Activated CD8-positive, alpha-beta T cell treated with anti-CD3 and anti-CD28 coated beads, Interleukin-2, amount 10 ng/mL, durations not matched to agents 7 days and 5 days (primary cell): ENCODE measurements at regions of chr11 and their contacts with region 1.

Region 1: DNA sequence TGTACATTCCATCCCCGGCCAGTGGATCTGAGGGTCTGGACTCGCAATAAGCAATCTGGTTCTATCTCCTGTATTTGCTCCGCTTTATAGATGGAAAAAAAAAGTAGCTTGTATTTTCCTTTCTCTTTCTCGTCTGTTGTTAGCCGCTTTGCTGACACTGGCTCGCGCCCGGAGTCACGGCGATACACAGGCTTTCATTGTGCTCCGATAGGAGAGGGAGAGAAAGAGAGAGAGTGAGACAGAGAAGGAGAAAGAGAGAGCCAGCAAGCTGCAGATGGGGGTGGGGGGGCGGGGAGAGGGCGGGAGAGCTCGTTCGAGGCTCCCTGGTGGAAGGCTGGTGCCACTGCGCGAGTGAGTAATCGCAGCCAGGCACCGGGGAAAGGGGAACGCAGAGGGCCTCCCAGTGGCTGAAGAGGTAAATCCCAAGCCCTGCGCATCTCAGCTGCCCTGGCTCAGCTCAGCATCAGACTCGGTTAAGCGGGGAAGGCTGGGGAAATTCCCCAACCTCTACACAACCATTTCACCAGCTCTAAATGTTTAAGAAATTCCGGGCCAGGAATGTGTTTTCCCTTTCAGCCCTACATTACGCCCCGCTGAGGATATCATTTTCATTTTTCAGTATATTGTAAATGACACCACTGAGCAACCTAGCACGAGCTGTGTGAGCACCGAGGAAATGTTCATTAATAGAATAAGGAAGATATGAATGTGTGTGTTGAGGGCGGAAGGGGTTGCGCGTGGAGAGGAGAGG is at the start of gene MAML2:
- DNase-seq: peak; percentile 95
- ATAC-seq: peak; percentile 83
- H3K4me3 Mint-ChIP-seq: peak within 1 kb of the TSS; percentile 91
- H3K27ac Mint-ChIP-seq: peak within 1 kb of the TSS; percentile 95
- H3K4me1 Mint-ChIP-seq: peaks cover 31% of the 10 kb centered on the region
- H3K27me3 Mint-ChIP-seq: no peaks in the 10 kb centered on the region
- total RNA-seq, gene MAML2: 14.7 to 15.5 TPM

Region 2: DNA sequence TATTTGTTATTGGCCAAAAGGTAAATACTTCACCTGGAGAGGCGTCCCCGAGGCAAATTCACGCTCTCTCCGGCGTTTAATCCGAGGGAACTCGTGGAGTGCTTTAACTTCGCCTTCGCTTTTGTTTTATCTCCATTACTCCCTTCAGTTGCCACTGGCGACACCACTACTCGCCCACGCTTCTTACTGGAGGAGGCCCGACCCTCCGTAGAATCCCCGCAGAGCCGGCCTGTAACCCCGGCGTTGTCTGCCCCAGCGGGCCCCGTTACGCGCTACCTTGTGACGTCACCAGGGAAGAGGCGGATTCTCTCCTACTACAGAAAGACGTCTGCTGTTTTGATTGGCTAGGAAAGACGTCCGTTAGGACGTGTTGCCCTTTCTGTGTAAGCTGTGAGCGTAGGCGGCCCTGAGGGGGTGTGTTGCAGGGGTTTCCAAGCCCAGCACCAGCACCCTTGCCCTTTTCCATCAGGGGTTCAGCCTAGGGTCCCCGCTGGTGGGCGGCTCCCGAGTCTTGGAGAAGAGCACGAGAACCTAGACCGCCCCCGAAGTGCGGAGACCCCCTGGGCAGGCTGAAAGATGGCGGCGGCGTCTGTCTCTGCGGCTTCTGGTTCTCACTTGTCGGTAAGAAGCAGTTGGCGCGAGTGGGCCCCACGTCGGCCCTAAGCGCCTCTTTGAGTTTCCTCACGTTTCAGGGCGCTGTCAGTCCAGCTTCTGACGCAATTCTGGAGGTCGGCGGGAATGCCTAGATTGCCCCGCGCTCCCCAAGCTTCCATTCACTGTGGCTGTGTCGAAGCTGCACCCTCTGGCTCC is 552.8 kb before region 1 on chr11 and contains the start of gene CEP57:
- CTCF ChIA-PET with region 1: interaction called, 8 read pairs
- POLR2A ChIA-PET with region 1: interaction called, 29 read pairs
- DNase-seq: peak; percentile 97
- ATAC-seq: peak; percentile 69
- H3K4me3 Mint-ChIP-seq: peak within 1 kb of the TSS; percentile 99
- H3K27ac Mint-ChIP-seq: peak within 1 kb of the TSS; percentile 100
- H3K4me1 Mint-ChIP-seq: peaks cover 55% of the 10 kb centered on the region
- H3K27me3 Mint-ChIP-seq: no peaks in the 10 kb centered on the region
- total RNA-seq, gene CEP57: 85.4 to 86.6 TPM

Region 3: GRCh38 chr11:96062134-96062533 is 281.0 kb before region 1 on chr11:
- CTCF ChIA-PET with region 1: interaction called, 96 read pairs
- POLR2A ChIA-PET with region 1: interaction called, 3 read pairs
- DNase-seq: peak; percentile 48
- ATAC-seq: peak; percentile 80
- H3K4me3 Mint-ChIP-seq: no peak overlapping the region
- H3K27ac Mint-ChIP-seq: peak overlapping the region; percentile 9
- H3K4me1 Mint-ChIP-seq: peaks cover 35% of the 10 kb centered on the region
- H3K27me3 Mint-ChIP-seq: no peaks in the 10 kb centered on the region

Region 4: GRCh38 chr11:96167203-96167758 is 175.9 kb before region 1 on chr11:
- CTCF ChIA-PET with region 1: interaction called, 12 read pairs
- POLR2A ChIA-PET with region 1: no interaction called
- DNase-seq: no peak
- ATAC-seq: no peak
- H3K4me3 Mint-ChIP-seq: no peak overlapping the region
- H3K27ac Mint-ChIP-seq: no peak overlapping the region
- H3K4me1 Mint-ChIP-seq: peaks cover 14% of the 10 kb centered on the region
- H3K27me3 Mint-ChIP-seq: no peaks in the 10 kb centered on the region

Region 5: GRCh38 chr11:96228473-96228891 is 114.7 kb before region 1 on chr11:
- CTCF ChIA-PET with region 1: interaction called, 32 read pairs
- POLR2A ChIA-PET with region 1: interaction called, 5 read pairs
- DNase-seq: no peak
- ATAC-seq: no peak
- H3K4me3 Mint-ChIP-seq: no peak overlapping the region
- H3K27ac Mint-ChIP-seq: no peak overlapping the region
- H3K4me1 Mint-ChIP-seq: peaks cover 30% of the 10 kb centered on the region
- H3K27me3 Mint-ChIP-seq: no peaks in the 10 kb centered on the region

Region 6: GRCh38 chr11:96279018-96279895 is 63.9 kb before region 1 on chr11:
- CTCF ChIA-PET with region 1: interaction called, 36 read pairs
- POLR2A ChIA-PET with region 1: interaction called, 4 read pairs
- DNase-seq: no peak
- ATAC-seq: peak; percentile 57
- H3K4me3 Mint-ChIP-seq: no peak overlapping the region
- H3K27ac Mint-ChIP-seq: peak overlapping the region; percentile 9
- H3K4me1 Mint-ChIP-seq: peaks cover 38% of the 10 kb centered on the region
- H3K27me3 Mint-ChIP-seq: no peaks in the 10 kb centered on the region

Region 7: GRCh38 chr11:96331699-96332116 is 11.4 kb before region 1 on chr11:
- CTCF ChIA-PET with region 1: interaction called, 69 read pairs
- POLR2A ChIA-PET with region 1: interaction called, 5 read pairs
- DNase-seq: no peak
- ATAC-seq: no peak
- H3K4me3 Mint-ChIP-seq: no peak overlapping the region
- H3K27ac Mint-ChIP-seq: no peak overlapping the region
- H3K4me1 Mint-ChIP-seq: peaks cover 60% of the 10 kb centered on the region
- H3K27me3 Mint-ChIP-seq: no peaks in the 10 kb centered on the region